ENCODE measurements at regions of chr11 and their contacts with region 1.

Region 1: GRCh38 chr11:7098235-7098832 is 9.5 kb downstream of the RBMXL2 start:
- DNase-seq: peak; percentile 25
- H3K4me3 ChIP-seq: no peak overlapping the region
- H3K27ac ChIP-seq: no peak overlapping the region
- H3K4me1 ChIP-seq: no peaks in the 10 kb centered on the region
- H3K27me3 ChIP-seq: no peaks in the 10 kb centered on the region
- CTCF ChIP-seq: peak; percentile 61 to 68

Region 2: DNA sequence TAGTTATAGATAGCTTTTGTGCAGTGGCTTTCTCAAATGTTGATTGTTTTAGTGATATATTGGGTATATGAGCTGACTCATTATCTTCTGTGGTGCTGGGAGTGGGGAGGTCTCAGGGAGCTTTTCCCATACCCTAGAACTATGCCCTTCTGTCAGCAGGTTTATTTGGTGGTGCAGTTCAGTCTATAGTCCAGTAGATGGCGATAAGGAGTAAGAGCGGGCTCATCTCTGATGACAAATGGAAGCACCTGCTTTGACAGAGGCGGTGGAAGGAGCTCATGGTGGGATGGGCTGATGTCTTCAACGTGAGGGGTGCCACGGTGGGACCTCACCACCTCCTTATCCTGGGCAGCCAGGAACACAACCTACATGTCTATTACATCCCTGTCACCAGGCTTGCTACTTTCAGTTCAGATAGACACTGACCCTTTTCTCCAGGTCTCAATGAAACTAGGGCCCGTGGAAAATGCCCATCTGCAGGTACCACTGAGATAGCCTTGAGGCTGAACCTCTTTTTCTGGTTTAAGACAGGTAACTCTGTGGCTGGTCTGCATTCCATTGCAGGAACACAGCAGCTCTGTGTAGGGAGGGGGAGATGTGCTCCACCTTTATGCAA is 285.8 kb before region 1 on chr11:
- CTCF ChIA-PET with region 1: no interaction called
- dilution Hi-C with region 1: no loop called
- in situ Hi-C with region 1: no loop called
- intact Hi-C with region 1: loop called (anchors 1 kb)
- DNase-seq: peak; percentile 28
- H3K4me3 ChIP-seq: no peak overlapping the region
- H3K27ac ChIP-seq: no peak overlapping the region
- H3K4me1 ChIP-seq: no peaks in the 10 kb centered on the region
- H3K27me3 ChIP-seq: no peaks in the 10 kb centered on the region
- CTCF ChIP-seq: peak; percentile 91 to 92

Region 3: GRCh38 chr11:7115780-7116179 is 17.4 kb after region 1 on chr11:
- CTCF ChIA-PET with region 1: no interaction called
- dilution Hi-C with region 1: no loop called
- in situ Hi-C with region 1: no loop called
- intact Hi-C with region 1: no loop called
- DNase-seq: no peak
- H3K4me3 ChIP-seq: no peak overlapping the region
- H3K27ac ChIP-seq: no peak overlapping the region
- H3K4me1 ChIP-seq: no peaks in the 10 kb centered on the region
- H3K27me3 ChIP-seq: peaks cover 2% of the 10 kb centered on the region
- CTCF ChIP-seq: no peak

Region 4: GRCh38 chr11:7246179-7246578 is 147.8 kb after region 1 on chr11:
- CTCF ChIA-PET with region 1: no interaction called
- dilution Hi-C with region 1: no loop called
- in situ Hi-C with region 1: no loop called
- intact Hi-C with region 1: no loop called
- DNase-seq: peak; percentile 47
- H3K4me3 ChIP-seq: no peak overlapping the region
- H3K27ac ChIP-seq: no peak overlapping the region
- H3K4me1 ChIP-seq: no peaks in the 10 kb centered on the region
- H3K27me3 ChIP-seq: no peaks in the 10 kb centered on the region
- CTCF ChIP-seq: no peak

Region 5: DNA sequence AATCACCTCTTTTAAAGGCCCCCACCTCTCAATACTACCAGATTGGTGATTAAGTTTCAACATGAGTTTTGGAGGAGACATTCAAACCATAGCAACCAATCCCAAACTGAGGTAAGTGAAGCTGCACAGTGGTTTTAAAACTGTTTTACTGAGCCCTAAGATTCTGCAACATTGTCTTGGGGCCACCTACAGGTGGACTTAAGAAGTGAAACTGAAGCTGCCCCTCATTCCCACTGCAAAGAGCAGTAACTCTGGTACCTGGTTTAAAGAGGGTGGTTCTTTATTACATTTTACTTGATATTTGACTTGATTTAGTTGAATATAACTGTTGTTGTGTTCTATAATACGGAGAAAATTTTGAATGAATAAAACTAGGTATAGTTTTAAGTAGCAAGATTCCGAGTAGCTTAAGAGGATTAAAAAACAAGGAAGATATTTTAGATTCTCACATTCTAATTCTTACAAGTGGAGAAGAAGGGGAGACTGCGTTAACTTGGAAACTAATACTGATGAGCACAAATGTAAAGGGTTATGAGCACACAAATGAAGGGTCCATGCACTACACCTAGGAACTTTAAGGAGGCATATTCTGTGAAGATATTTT is 180.1 kb after region 1 on chr11:
- CTCF ChIA-PET with region 1: interaction called, 3 read pairs
- dilution Hi-C with region 1: no loop called
- in situ Hi-C with region 1: no loop called
- intact Hi-C with region 1: loop called (anchors 2 kb)
- DNase-seq: peak; percentile 15
- H3K4me3 ChIP-seq: no peak overlapping the region
- H3K27ac ChIP-seq: no peak overlapping the region
- H3K4me1 ChIP-seq: peaks cover 5% of the 10 kb centered on the region
- H3K27me3 ChIP-seq: no peaks in the 10 kb centered on the region
- CTCF ChIP-seq: peak; percentile 68 to 78

Region 6: GRCh38 chr11:7353100-7353499 is 254.8 kb after region 1 on chr11:
- CTCF ChIA-PET with region 1: no interaction called
- dilution Hi-C with region 1: no loop called
- in situ Hi-C with region 1: no loop called
- intact Hi-C with region 1: loop called (anchors 2 kb)
- DNase-seq: peak; percentile 24
- H3K4me3 ChIP-seq: no peak overlapping the region
- H3K27ac ChIP-seq: no peak overlapping the region
- H3K4me1 ChIP-seq: no peaks in the 10 kb centered on the region
- H3K27me3 ChIP-seq: peaks cover 3% of the 10 kb centered on the region
- CTCF ChIP-seq: peak; percentile 67 to 75

Region 7: GRCh38 chr11:7665473-7666291 is 567.3 kb after region 1 on chr11:
- CTCF ChIA-PET with region 1: no interaction called
- dilution Hi-C with region 1: no loop called
- in situ Hi-C with region 1: no loop called
- intact Hi-C with region 1: loop called (anchors 1 kb)
- DNase-seq: peak; percentile 75
- H3K4me3 ChIP-seq: no peak overlapping the region
- H3K27ac ChIP-seq: no peak overlapping the region
- H3K4me1 ChIP-seq: peaks cover 23% of the 10 kb centered on the region
- H3K27me3 ChIP-seq: no peaks in the 10 kb centered on the region
- CTCF ChIP-seq: peak; percentile 89 to 96

Region 8: DNA sequence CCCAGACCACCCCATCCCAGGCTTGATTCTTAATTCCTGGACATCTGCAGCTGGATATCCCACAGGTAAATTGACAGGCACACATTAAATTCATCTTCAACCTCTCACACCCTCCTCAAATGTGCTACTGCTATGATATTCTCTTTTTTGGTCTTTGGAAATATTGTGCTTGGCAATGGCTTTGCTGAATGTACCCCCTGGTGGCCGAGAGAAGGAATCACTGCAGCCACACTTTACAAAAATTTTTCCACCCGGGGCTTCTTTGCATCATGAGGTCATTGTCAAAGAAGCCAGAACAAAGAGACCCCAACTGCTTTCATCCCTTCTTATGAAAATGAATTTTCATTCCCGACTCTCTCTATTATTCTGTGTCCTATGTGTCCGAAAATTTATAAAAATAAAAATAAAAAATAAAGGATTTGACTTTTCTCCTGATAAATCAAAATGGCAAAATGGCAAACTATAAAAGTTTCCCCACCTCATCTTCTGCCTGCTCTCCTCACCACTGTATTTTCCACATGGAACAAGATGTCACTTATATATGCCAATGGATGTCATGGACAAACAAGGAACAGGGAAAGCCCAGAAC is 590.0 kb after region 1 on chr11:
- CTCF ChIA-PET with region 1: no interaction called
- dilution Hi-C with region 1: no loop called
- in situ Hi-C with region 1: loop called in 1 of 2 experiments (anchors 25 kb)
- intact Hi-C with region 1: loop called (anchors 5 kb)
- DNase-seq: peak; percentile 20
- H3K4me3 ChIP-seq: no peak overlapping the region
- H3K27ac ChIP-seq: no peak overlapping the region
- H3K4me1 ChIP-seq: peaks cover 9% of the 10 kb centered on the region
- H3K27me3 ChIP-seq: no peaks in the 10 kb centered on the region
- CTCF ChIP-seq: peak; percentile 78 to 83

Region 9: GRCh38 chr11:7749456-7749855 is 651.1 kb after region 1 on chr11:
- CTCF ChIA-PET with region 1: no interaction called
- dilution Hi-C with region 1: no loop called
- in situ Hi-C with region 1: no loop called
- intact Hi-C with region 1: no loop called
- DNase-seq: peak; percentile 60
- H3K4me3 ChIP-seq: no peak overlapping the region
- H3K27ac ChIP-seq: no peak overlapping the region
- H3K4me1 ChIP-seq: no peaks in the 10 kb centered on the region
- H3K27me3 ChIP-seq: no peaks in the 10 kb centered on the region
- CTCF ChIP-seq: no peak

Measured in mammary epithelial cell (primary cell).